Activated CD8-positive, alpha-beta memory T cell treated with anti-CD3 and anti-CD28 coated beads, Interleukin-2, amount 10 ng/mL, durations not matched to agents 7 days and 5 days (primary cell): ENCODE measurements at regions of chr7 and their contacts with region 1.

Region 1: GRCh38 chr7:143279186-143280098 is 5.3 kb upstream of the TMEM139 start:
- DNase-seq: no peak
- ATAC-seq: peak; percentile 74
- H3K4me3 Mint-ChIP-seq: peak overlapping the region; percentile 62
- H3K27ac Mint-ChIP-seq: peak overlapping the region; percentile 81
- H3K4me1 Mint-ChIP-seq: peaks cover 36% of the 10 kb centered on the region
- H3K27me3 Mint-ChIP-seq: no peaks in the 10 kb centered on the region

Region 2: GRCh38 chr7:143299840-143300239 is 20.4 kb after region 1 on chr7:
- CTCF ChIA-PET with region 1: interaction called, 14 read pairs
- DNase-seq: peak; percentile 70
- ATAC-seq: peak; percentile 88
- H3K4me3 Mint-ChIP-seq: no peak overlapping the region
- H3K27ac Mint-ChIP-seq: peak overlapping the region; percentile 25
- H3K4me1 Mint-ChIP-seq: peaks cover 45% of the 10 kb centered on the region
- H3K27me3 Mint-ChIP-seq: no peaks in the 10 kb centered on the region

Region 3: DNA sequence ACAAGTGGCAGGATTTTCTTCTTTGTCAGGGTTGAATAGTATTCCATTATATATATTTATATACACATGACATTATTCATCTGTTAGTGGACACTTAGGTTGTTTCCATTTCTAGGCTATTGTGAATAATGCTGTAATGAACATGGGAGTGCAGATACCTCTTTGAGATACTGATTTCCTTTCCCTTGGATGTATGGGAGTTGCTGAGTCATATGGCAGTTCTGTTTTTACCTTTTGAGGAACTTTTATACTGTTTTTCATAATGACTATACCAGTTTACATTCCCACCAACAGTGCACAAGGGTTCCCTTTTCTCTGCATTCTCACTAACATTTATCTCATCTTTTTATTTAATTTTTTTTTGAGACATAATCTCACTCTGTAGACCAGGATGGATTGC is 34.7 kb after region 1 on chr7:
- CTCF ChIA-PET with region 1: no interaction called
- DNase-seq: no peak
- ATAC-seq: no peak
- H3K4me3 Mint-ChIP-seq: no peak overlapping the region
- H3K27ac Mint-ChIP-seq: no peak overlapping the region
- H3K4me1 Mint-ChIP-seq: peaks cover 30% of the 10 kb centered on the region
- H3K27me3 Mint-ChIP-seq: no peaks in the 10 kb centered on the region

Region 4: GRCh38 chr7:144102041-144102440 is 822.6 kb after region 1 on chr7:
- CTCF ChIA-PET with region 1: no interaction called
- DNase-seq: no peak
- ATAC-seq: no peak
- H3K4me3 Mint-ChIP-seq: no peak overlapping the region
- H3K27ac Mint-ChIP-seq: no peak overlapping the region
- H3K4me1 Mint-ChIP-seq: no peaks in the 10 kb centered on the region
- H3K27me3 Mint-ChIP-seq: peaks cover 22% of the 10 kb centered on the region